ENCODE measurements at regions of chr16 and their contacts with region 1.

Region 1: DNA sequence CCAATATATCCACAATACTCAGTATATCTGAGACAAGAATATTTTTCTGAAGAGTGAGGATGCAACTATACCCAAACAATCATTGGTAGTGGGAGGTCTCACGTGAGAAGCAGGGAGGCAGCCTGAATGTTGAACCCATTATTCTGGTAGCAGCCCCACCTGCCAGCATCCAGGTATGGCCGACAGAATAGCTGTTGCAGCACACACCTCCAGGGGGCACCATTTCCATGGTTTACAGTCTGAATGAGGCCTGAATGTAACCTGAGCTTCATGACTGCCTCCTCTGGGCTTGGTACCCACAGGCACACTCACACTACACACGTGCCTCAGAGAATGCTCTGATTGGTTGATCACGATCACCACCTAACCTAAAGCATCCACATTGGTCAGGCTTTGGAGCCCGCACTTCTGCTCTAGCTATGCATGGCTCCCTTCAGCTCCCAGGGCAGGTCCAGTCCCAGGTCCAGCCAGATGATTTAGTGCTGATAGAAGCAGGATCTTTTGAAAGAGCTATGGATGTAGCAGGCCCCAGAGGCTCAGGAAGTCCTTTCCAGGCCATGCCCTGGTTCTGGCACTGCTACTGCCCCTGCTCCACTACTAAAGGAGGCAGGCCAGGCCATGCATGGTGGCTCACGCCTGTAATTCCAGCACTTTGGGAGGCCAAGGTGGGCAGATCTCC is 11.0 kb upstream of the CBFB start:
- DNase-seq: peak; percentile 95
- ATAC-seq: peak; percentile 87
- H3K4me3 Mint-ChIP-seq: no peak overlapping the region
- H3K27ac Mint-ChIP-seq: peak overlapping the region; percentile 52
- H3K4me1 Mint-ChIP-seq: peaks cover 17% of the 10 kb centered on the region
- H3K27me3 Mint-ChIP-seq: no peaks in the 10 kb centered on the region
- CTCF ChIP-seq: peak; percentile 78

Region 2: DNA sequence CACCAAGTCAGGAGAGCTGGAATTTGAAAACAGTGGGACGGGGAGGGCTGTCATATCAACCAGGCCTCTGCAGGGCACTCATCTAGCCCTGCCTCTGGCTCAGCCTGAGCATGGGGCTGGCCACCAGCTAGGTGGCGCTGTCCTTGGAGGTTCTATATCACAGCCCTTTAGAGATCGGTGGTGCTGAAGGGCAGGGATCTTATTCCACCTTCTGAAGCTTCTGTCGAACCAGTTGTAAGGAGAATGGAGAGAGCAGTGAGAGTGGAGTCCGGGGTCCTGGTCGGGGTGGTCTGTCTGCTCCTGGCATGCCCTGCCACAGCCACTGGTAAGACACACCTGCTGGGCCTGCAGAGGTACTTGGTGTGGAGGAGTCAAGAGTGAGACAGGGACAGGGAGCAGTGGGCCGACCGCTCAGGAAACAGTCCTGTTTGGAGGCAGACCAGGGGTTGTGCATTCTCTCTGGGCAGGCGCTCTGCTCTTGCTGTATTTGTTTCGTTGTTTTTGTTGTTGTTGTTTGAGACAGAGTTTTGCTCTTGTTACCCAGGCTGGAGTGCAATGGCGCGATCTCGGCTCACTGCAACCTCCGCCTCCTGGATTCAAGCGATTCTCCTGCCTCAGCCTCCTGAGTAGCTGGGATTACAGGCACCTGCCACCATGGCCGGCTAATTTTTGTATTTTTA is 56.7 kb before region 1 on chr16 and contains the start of gene CES3:
- CTCF ChIA-PET with region 1: interaction called, 16 read pairs
- POLR2A ChIA-PET with region 1: no interaction called
- intact Hi-C with region 1: no loop called
- DNase-seq: peak; percentile 84
- ATAC-seq: peak; percentile 94
- H3K4me3 Mint-ChIP-seq: peak within 1 kb of the TSS; percentile 24
- H3K27ac Mint-ChIP-seq: peak within 1 kb of the TSS; percentile 83
- H3K4me1 Mint-ChIP-seq: peaks cover 16% of the 10 kb centered on the region
- H3K27me3 Mint-ChIP-seq: peaks cover 4% of the 10 kb centered on the region
- CTCF ChIP-seq: peak; percentile 78
- total RNA-seq, gene CES3: 2.1 to 2.9 TPM

Region 3: DNA sequence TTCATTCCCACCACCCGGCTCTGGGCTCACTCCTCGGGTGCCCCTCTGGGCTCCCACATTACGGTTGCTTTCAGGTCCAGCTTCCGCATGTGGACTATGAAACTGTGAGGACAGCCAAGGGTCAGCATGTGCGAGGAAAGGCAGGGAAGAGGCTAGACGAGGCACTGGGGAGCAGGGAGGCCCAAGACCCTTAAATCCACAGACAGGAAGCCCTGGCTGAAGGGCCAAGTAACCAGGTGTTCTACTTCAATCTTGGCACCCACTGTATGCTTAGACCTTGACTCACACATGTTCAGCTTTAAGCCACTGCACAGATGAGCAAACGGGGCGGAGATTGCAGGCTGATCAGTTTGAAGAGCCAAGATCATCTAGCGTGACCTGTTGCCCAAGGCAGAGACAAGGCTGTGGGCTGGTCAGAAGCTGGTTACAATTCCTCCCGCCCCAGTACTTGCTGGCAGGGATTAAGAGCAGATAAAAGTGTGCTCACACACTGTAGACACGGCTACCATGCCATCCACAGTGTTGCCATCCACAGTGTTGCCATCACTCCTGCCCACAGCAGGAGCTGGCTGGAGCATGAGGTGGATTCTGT is 29.7 kb before region 1 on chr16 and contains the start of gene CES4A:
- CTCF ChIA-PET with region 1: interaction called, 16 read pairs
- POLR2A ChIA-PET with region 1: interaction called, 12 read pairs
- intact Hi-C with region 1: loop called (anchors 5 kb)
- DNase-seq: peak; percentile 32
- ATAC-seq: no peak
- H3K4me3 Mint-ChIP-seq: no peak within 1 kb of the TSS
- H3K27ac Mint-ChIP-seq: peak within 1 kb of the TSS; percentile 73
- H3K4me1 Mint-ChIP-seq: peaks cover 35% of the 10 kb centered on the region
- H3K27me3 Mint-ChIP-seq: no peaks in the 10 kb centered on the region
- CTCF ChIP-seq: no peak
- total RNA-seq, gene CES4A: 4.5 to 5.9 TPM

Region 4: GRCh38 chr16:67028555-67029248 is 10.8 kb after region 1 on chr16 and contains the start of gene CBFB:
- CTCF ChIA-PET with region 1: interaction called, 127 read pairs
- POLR2A ChIA-PET with region 1: interaction called, 52 read pairs
- intact Hi-C with region 1: no loop called
- DNase-seq: peak; percentile 92
- ATAC-seq: peak; percentile 92
- H3K4me3 Mint-ChIP-seq: peak within 1 kb of the TSS; percentile 86
- H3K27ac Mint-ChIP-seq: peak within 1 kb of the TSS; percentile 95
- H3K4me1 Mint-ChIP-seq: peaks cover 54% of the 10 kb centered on the region
- H3K27me3 Mint-ChIP-seq: no peaks in the 10 kb centered on the region
- CTCF ChIP-seq: peak; percentile 27
- total RNA-seq, gene CBFB: 111 to 114 TPM

Region 5: GRCh38 chr16:67104061-67104460 is 86.1 kb after region 1 on chr16:
- CTCF ChIA-PET with region 1: interaction called, 48 read pairs
- POLR2A ChIA-PET with region 1: interaction called, 3 read pairs
- intact Hi-C with region 1: no loop called
- DNase-seq: peak; percentile 12
- ATAC-seq: peak; percentile 55
- H3K4me3 Mint-ChIP-seq: no peak overlapping the region
- H3K27ac Mint-ChIP-seq: no peak overlapping the region
- H3K4me1 Mint-ChIP-seq: no peaks in the 10 kb centered on the region
- H3K27me3 Mint-ChIP-seq: no peaks in the 10 kb centered on the region
- CTCF ChIP-seq: no peak

Region 6: GRCh38 chr16:67183627-67184328 is 165.8 kb after region 1 on chr16 and contains the start of gene MATCAP1:
- CTCF ChIA-PET with region 1: interaction called, 71 read pairs
- POLR2A ChIA-PET with region 1: no interaction called
- intact Hi-C with region 1: no loop called
- DNase-seq: peak; percentile 97
- ATAC-seq: peak; percentile 97
- H3K4me3 Mint-ChIP-seq: peak within 1 kb of the TSS; percentile 66
- H3K27ac Mint-ChIP-seq: no peak within 1 kb of the TSS
- H3K4me1 Mint-ChIP-seq: peaks cover 17% of the 10 kb centered on the region
- H3K27me3 Mint-ChIP-seq: peaks cover 21% of the 10 kb centered on the region
- CTCF ChIP-seq: no peak
- total RNA-seq, gene MATCAP1: 49.5 to 49.9 TPM

Measured in activated CD8-positive, alpha-beta T cell treated with anti-CD3 and anti-CD28 coated beads for 36 hours (primary cell).